Heart right ventricle (tissue), 16 donors: ENCODE measurements at regions of chr5 and their contacts with region 1.

Region 1: DNA sequence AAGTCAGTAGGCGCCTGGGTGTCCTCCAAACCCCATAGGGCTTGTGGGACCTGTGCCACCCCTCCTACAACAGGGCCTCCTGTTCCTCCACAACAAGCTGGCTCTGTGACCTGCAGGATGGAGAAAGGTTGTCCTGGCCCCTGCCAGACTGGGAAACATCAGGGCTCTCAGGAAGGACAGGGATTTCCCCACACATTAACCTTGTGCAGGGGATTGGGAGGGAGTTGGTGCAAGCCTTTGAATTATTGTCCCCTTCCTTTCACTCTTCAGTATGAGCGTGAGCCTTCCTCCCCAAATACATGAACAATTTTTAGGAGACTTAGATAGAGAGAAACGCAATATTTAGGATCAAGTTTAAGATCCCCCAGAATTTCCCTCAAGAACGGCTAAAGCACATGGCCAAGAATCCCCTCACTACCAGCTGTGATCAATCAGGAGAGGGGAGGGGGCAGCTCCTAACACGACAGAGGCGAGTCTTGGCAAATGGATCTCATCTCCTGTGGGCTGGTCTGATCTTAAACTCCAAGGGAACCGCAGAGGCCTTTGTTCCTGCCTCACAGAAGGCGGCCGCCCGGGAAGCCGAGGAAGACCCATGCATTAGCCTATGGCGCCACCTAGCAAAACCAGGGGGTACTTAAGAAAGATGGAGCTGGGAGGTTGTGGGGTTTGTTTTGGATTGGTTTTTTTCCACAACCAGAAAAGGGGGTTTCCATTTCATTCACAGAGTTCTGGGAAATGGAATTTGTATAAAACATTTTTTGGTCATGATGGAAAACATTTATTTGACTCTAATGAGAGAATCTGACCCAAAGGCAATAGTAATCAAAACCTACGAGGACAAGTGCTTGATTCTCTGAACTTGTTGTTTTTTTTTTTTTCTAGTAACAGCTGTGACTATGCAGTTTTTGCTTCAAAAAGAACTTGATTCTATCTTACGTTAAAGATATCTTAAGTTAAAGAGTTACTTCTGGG is 36.1 kb upstream of the OSMR start:
- DNase-seq: peak; percentile 76 to 87
- ATAC-seq: peak; percentile 83 to 94 (median 90)
- H3K4me3 ChIP-seq: no peak overlapping the region
- H3K27ac ChIP-seq: peak overlapping the region in 7 of 10 donors; percentile 24 to 62 (median 43)
- H3K4me1 ChIP-seq: peaks cover 6 to 47% (median 39%) of the 10 kb centered on the region in 9 donors
- H3K27me3 ChIP-seq: peaks cover 0 to 4% (median 0%) of the 10 kb centered on the region in 7 donors
- CTCF ChIP-seq: peak; percentile 80 to 95 (median 83)

Region 2: DNA sequence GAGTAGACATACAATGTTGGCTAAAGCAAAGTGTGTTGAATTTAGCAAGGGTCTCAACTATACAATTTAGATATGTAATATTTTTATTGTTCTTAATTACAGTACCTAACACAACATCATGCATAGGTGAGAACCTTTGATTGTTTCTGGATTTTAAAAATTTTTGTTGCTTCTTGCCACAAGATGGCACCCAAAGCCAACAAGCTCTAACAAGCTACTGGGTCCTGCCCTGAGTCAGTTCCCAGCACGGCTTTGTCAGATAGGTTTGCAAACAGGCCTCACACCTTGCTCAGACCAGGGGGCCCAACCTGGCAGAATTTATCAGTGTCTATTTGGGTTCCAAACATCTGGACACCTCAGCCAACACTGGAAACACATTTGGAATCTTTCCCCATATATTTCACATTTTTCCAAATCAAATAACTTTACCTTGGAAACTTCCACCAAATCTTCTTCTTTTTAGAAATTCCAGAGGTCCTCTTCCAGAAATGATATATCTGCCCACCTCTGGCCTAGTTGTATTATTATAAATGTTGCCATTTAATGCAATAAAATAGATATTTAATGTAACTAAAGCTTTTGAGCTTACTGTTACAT is 600.8 kb before region 1 on chr5:
- intact Hi-C with region 1: loop called in 2 of 10 experiments (anchors 5 to 10 kb)
- DNase-seq: peak in 1 of 2 donors; percentile 22
- ATAC-seq: peak in 1 of 8 donors; percentile 57
- H3K4me3 ChIP-seq: no peak overlapping the region
- H3K27ac ChIP-seq: no peak overlapping the region
- H3K4me1 ChIP-seq: no peaks in the 10 kb centered on the region
- H3K27me3 ChIP-seq: peaks cover 0 to 25% (median 12%) of the 10 kb centered on the region in 7 donors
- CTCF ChIP-seq: peak in 8 of 9 donors; percentile 23 to 65 (median 52)

Region 3: GRCh38 chr5:38420691-38421390 is 388.8 kb before region 1 on chr5:
- intact Hi-C with region 1: loop called in 7 of 10 experiments (anchors 1 to 5 kb)
- DNase-seq: peak; percentile 27 to 53
- ATAC-seq: peak in 6 of 8 donors; percentile 45 to 77 (median 74)
- H3K4me3 ChIP-seq: no peak overlapping the region
- H3K27ac ChIP-seq: no peak overlapping the region
- H3K4me1 ChIP-seq: peaks cover 0 to 13% (median 0%) of the 10 kb centered on the region in 9 donors
- H3K27me3 ChIP-seq: peaks cover 0 to 7% (median 0%) of the 10 kb centered on the region in 7 donors
- CTCF ChIP-seq: peak; percentile 38 to 82 (median 74)

Region 4: DNA sequence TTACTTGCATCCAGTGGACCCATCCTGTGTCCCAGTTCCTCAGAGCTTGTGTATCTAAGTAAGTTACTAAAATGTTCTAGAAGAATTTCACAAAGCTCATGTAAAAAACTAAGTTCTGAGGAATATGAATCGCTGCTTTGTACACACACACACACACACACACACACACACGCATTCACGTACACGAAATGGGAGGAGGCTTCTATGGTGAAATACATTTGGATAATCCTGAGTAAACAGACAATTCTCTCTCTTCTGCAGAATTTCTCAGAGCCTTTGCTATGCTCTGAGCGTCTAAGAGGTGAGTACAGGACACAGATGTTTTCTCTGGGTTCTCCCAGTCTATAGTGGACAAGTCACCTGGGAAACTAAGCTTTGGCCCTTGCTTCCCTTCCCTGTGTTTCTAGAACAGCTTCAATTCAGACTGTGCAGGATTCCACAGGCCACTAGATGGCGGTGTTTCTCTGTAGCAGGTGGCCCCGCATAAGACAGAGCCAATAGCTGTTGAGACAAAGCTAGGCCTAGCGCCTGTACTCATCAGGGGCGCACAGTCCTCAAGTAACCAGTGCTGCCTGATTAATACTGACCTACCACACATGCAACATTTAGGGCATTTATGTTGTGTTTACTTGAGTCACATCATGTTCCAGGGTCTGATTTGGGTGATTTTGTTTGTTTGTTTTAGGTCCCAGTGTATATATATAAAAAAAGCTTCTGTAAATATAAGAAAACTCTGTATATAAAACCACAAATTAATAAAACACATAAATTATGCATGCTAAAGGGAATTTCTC is 368.0 kb before region 1 on chr5:
- intact Hi-C with region 1: loop called (anchors 1 to 5 kb)
- DNase-seq: peak; percentile 75 to 91
- ATAC-seq: peak; percentile 91 to 98 (median 95)
- H3K4me3 ChIP-seq: no peak overlapping the region
- H3K27ac ChIP-seq: no peak overlapping the region
- H3K4me1 ChIP-seq: peaks cover 0 to 18% (median 5%) of the 10 kb centered on the region in 9 donors
- H3K27me3 ChIP-seq: peaks cover 0 to 73% (median 0%) of the 10 kb centered on the region in 7 donors
- CTCF ChIP-seq: peak; percentile 90 to 98 (median 97)

Region 5: GRCh38 chr5:38556599-38557305 is 252.9 kb before region 1 on chr5 and contains the start of gene LIFR:
- intact Hi-C with region 1: loop called in 6 of 10 experiments (anchors 2 to 10 kb)
- DNase-seq: peak; percentile 84 to 88
- ATAC-seq: peak; percentile 90 to 93 (median 92)
- H3K4me3 ChIP-seq: peak within 1 kb of the TSS; percentile 67 to 97 (median 83)
- H3K27ac ChIP-seq: peak within 1 kb of the TSS; percentile 93 to 100 (median 98)
- H3K4me1 ChIP-seq: peaks cover 0 to 64% (median 32%) of the 10 kb centered on the region in 9 donors
- H3K27me3 ChIP-seq: peaks cover 0 to 64% (median 0%) of the 10 kb centered on the region in 7 donors
- CTCF ChIP-seq: peak in 1 of 9 donors; percentile 4
- total RNA-seq, gene LIFR: 34.7 to 58.8 (median 46.0) TPM

Region 6: GRCh38 chr5:38591523-38591849 is 218.2 kb before region 1 on chr5:
- intact Hi-C with region 1: no loop called
- DNase-seq: no peak
- ATAC-seq: no peak
- H3K4me3 ChIP-seq: no peak overlapping the region
- H3K27ac ChIP-seq: peak overlapping the region in 1 of 10 donors; percentile 5
- H3K4me1 ChIP-seq: peaks cover 0 to 41% (median 11%) of the 10 kb centered on the region in 9 donors
- H3K27me3 ChIP-seq: no peaks in the 10 kb centered on the region
- CTCF ChIP-seq: no peak

Region 7: GRCh38 chr5:38672059-38672788 is 137.4 kb before region 1 on chr5:
- intact Hi-C with region 1: loop called in 7 of 10 experiments (anchors 5 to 10 kb)
- DNase-seq: no peak
- ATAC-seq: no peak
- H3K4me3 ChIP-seq: no peak overlapping the region
- H3K27ac ChIP-seq: no peak overlapping the region
- H3K4me1 ChIP-seq: no peaks in the 10 kb centered on the region
- H3K27me3 ChIP-seq: no peaks in the 10 kb centered on the region
- CTCF ChIP-seq: no peak

Region 8: GRCh38 chr5:38695021-38695958 is 114.4 kb before region 1 on chr5:
- intact Hi-C with region 1: no loop called
- DNase-seq: no peak
- ATAC-seq: peak in 3 of 8 donors; percentile 31 to 71 (median 38)
- H3K4me3 ChIP-seq: no peak overlapping the region
- H3K27ac ChIP-seq: no peak overlapping the region
- H3K4me1 ChIP-seq: peaks cover 0 to 22% (median 0%) of the 10 kb centered on the region in 9 donors
- H3K27me3 ChIP-seq: no peaks in the 10 kb centered on the region
- CTCF ChIP-seq: no peak